Activated CD4-positive, alpha-beta T cell treated with anti-CD3 and anti-CD28 coated beads, Interleukin-2, amount 10 ng/mL, durations not matched to agents 7 days and 5 days (primary cell): ENCODE measurements at regions of chr2 and their contacts with region 1.

Region 1: GRCh38 chr2:231713730-231714430 is 5.6 kb downstream of the PTMA start:
- DNase-seq: peak; percentile 91
- H3K4me3 Mint-ChIP-seq: peak overlapping the region; percentile 56
- H3K27ac Mint-ChIP-seq: peak overlapping the region; percentile 91
- H3K4me1 Mint-ChIP-seq: peaks cover 32% of the 10 kb centered on the region
- H3K27me3 Mint-ChIP-seq: no peaks in the 10 kb centered on the region

Region 2: DNA sequence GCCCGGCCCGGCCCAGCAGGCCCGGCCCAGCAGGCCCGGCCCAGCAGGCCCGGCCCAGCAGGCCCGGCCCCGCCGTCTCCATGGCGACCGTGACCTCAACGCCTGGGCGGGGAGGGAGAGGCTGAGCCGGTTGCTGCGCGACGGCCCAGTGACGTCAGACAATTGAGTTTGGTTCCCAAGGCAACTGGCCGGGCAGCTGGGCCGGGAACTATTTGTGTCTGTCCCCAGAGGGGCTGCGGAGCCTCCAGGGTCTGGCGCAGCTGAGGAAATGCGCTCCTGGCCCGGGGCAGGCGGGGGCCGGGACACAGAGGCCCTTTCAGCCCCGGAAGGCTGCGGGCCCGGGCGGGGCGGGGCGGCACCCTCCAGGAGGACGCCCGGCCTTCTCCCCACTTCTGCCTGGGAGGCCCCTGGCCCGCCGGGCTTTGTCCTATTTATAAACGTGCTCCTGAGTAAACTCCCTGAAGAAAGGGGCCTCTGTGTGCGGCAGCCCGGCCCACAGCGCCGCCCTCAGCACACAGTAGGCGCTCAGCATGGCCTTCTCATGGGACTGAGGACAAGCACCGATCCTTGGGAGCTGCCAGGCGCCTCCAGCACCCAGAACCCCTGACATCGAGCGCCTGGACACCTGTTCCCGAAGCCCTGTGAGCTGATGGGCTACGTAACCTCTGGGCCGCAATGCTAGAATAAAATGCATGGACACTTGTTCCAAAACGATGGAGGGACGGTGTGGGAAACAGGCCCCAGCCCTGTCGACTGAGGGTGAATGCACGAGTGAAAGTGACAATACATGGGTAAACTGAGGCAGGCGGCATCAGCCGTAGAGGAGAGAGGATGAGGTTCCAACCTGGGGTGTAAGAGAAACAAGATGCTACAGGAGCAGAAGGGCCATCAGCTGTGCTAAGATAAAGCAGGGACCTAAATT is 108.9 kb before region 1 on chr2:
- CTCF ChIA-PET with region 1: interaction called, 111 read pairs
- POLR2A ChIA-PET with region 1: no interaction called
- DNase-seq: peak; percentile 98
- H3K4me3 Mint-ChIP-seq: peak overlapping the region; percentile 56
- H3K27ac Mint-ChIP-seq: peak overlapping the region; percentile 72
- H3K4me1 Mint-ChIP-seq: peaks cover 25% of the 10 kb centered on the region
- H3K27me3 Mint-ChIP-seq: peaks cover 5% of the 10 kb centered on the region

Region 3: GRCh38 chr2:231662028-231662810 is 51.7 kb before region 1 on chr2:
- CTCF ChIA-PET with region 1: interaction called, 11 read pairs
- POLR2A ChIA-PET with region 1: no interaction called
- DNase-seq: peak; percentile 96
- H3K4me3 Mint-ChIP-seq: peak overlapping the region; percentile 74
- H3K27ac Mint-ChIP-seq: peak overlapping the region; percentile 96
- H3K4me1 Mint-ChIP-seq: peaks cover 36% of the 10 kb centered on the region
- H3K27me3 Mint-ChIP-seq: no peaks in the 10 kb centered on the region

Region 4: DNA sequence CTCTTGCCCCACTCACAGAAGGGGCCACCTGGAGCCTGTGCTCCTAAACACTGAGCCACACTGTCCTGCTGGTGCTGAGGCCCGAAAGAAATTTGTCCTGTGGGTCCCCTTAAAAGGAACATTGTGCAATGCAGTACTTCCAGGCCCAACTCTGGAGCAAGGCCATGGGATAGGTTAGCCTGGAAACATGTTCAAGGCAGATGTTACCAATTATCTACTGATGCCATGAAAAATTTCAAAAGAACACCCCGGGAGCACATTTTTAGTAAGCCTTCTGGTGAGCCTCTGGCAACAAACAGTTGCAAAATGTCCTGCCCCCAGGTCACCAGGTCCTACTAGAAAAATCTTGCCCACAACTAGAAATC is 17.9 kb before region 1 on chr2:
- CTCF ChIA-PET with region 1: interaction called, 44 read pairs
- POLR2A ChIA-PET with region 1: no interaction called
- DNase-seq: no peak
- H3K4me3 Mint-ChIP-seq: no peak overlapping the region
- H3K27ac Mint-ChIP-seq: no peak overlapping the region
- H3K4me1 Mint-ChIP-seq: no peaks in the 10 kb centered on the region
- H3K27me3 Mint-ChIP-seq: peaks cover 2% of the 10 kb centered on the region

Region 5: DNA sequence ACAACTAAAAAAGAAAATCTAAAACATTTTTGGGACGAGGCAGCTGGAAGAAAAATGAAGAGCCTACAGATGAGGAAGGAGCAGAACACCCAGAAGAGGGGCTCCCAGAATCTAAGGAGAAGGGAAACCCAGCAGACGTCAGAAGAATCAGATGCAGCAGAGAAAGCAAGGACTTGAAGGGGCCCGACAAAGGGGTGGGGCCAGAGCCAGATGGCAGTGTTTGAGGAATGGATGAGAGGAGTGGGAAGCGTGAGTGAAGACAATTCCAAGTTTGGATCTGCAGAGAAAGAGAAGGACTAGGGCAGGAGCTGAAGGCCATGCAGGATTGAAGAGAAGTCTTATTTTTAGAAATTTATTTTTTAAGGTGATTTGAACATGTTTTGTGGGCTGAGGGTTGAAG is 13.7 kb after region 1 on chr2:
- CTCF ChIA-PET with region 1: interaction called, 30 read pairs
- POLR2A ChIA-PET with region 1: no interaction called
- DNase-seq: no peak
- H3K4me3 Mint-ChIP-seq: no peak overlapping the region
- H3K27ac Mint-ChIP-seq: no peak overlapping the region
- H3K4me1 Mint-ChIP-seq: peaks cover 6% of the 10 kb centered on the region
- H3K27me3 Mint-ChIP-seq: no peaks in the 10 kb centered on the region

Region 6: DNA sequence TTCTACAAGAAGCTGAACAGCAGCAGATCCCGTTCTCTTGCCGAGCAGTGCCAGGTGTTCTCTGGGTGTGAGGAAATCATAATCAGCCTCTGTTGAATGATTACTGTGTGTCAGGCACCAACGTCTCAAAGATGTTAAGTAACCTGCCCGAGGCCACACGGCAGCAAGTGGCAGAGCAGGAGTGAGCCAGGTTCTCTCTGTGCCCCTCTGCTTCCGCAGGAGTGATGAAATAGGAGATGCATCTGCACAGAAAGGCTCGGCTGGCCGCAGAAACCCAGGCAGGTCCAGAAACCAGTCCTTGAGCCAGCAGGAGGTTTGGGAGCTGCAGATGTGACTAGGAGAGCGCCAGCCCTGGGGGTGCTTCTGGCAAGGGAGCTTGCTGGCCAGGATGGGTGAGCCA is 140.8 kb after region 1 on chr2:
- CTCF ChIA-PET with region 1: no interaction called
- POLR2A ChIA-PET with region 1: no interaction called
- DNase-seq: no peak
- H3K4me3 Mint-ChIP-seq: no peak overlapping the region
- H3K27ac Mint-ChIP-seq: no peak overlapping the region
- H3K4me1 Mint-ChIP-seq: peaks cover 7% of the 10 kb centered on the region
- H3K27me3 Mint-ChIP-seq: peaks cover 9% of the 10 kb centered on the region